Activated CD4-positive, alpha-beta T cell treated with anti-CD3 and anti-CD28 coated beads for 36 hours (primary cell): ENCODE measurements at regions of chr2 and their contacts with region 1.

Region 1: DNA sequence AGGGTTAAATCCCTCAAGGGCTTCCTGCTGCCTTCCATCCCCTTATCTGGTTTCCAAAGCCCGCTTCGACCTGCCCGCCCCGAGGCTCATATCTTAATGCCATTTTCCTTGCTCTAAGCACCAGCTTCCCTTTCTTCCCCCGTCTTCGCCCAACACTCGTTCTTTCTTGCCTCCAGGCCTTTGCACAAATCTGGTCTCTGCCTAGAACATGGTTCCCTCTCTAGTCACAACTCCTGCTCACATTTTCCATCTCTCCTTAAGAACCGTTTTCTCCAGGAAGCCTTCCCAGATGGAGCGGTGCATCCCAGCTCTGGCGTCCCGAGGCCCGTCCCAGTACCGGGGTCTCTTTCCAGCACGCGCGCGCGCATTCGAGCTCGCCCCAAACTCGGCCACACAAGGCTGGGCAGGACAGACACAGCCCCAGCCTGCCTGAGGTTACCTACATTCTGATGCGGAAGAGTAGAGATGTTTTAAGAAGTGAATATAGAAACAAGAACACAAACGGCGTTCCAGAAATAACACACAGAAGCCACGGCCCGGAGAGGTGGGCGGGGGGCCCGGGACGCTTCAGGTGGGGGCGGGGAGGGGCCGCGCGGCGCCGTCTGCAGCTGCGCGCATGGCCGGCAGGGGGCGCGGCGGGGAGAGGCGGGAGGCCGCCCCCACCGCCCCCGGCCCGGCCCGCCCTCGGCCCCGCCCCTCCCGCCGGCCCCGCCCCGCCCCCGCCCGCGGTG is at the start of gene DGKD:
- DNase-seq: peak; percentile 88
- ATAC-seq: peak; percentile 62
- H3K4me3 Mint-ChIP-seq: peak within 1 kb of the TSS; percentile 85
- H3K27ac Mint-ChIP-seq: peak within 1 kb of the TSS; percentile 80
- H3K4me1 Mint-ChIP-seq: peaks cover 63% of the 10 kb centered on the region
- H3K27me3 Mint-ChIP-seq: no peaks in the 10 kb centered on the region
- total RNA-seq, gene DGKD: 57.0 to 62.6 TPM

Region 2: DNA sequence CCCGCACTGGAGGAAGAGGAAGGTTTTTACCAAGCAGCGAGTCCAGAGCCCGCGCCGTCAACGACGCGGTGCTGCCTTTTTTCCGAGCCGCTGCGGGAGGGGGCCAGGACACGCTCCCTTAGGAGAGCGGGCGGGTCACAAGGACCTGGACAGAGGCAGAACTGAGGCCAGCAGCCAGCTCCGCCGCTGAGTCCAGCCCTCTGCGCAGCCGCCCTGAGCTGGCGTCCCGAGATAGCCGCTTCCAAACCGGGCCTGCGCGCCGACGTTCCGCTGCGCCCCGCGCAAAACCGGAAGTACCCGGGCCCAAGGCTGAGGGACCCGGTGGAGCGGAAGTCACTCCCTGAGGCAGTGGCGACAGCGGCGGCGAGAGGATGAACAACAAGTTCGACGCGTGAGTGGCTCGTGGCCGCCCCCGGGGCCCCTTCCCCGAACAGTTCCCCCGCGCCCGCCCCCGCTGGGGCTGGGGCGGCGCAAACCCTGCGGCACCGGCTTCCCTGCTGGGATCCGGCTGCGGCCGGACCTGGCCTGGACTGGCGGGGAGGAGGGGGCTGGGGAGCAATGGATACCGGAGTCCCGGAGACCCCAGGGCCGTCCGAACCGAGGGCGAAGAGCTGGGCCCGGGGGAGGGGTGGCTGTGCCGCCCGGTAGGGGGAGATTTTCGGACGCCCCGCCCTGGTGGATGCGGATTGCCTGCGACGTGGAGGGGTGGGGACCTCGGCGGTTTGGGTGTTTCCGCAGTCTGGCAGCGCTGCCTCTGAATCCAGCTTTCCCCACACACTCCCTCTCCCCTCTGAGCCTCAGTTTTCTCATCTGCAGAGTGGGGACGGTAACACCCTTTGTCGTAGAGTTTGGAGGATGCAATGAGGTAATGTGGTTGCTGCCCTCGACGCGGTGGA is 803.3 kb before region 1 on chr2 and contains the starts of genes EIF4E2 and TIGD1:
- CTCF ChIA-PET with region 1: no interaction called
- POLR2A ChIA-PET with region 1: no interaction called
- intact Hi-C with region 1: loop called in 1 of 2 experiments (anchors 2 kb)
- DNase-seq: peak; percentile 96
- ATAC-seq: peak; percentile 95
- H3K4me3 Mint-ChIP-seq: peak within 1 kb of the TSS; percentile 98
- H3K27ac Mint-ChIP-seq: peak within 1 kb of the TSS; percentile 100
- H3K4me1 Mint-ChIP-seq: peaks cover 66% of the 10 kb centered on the region
- H3K27me3 Mint-ChIP-seq: no peaks in the 10 kb centered on the region
- total RNA-seq, gene EIF4E2: 57.0 to 68.0 TPM
- total RNA-seq, gene TIGD1: 7.6 to 7.9 TPM

Region 3: DNA sequence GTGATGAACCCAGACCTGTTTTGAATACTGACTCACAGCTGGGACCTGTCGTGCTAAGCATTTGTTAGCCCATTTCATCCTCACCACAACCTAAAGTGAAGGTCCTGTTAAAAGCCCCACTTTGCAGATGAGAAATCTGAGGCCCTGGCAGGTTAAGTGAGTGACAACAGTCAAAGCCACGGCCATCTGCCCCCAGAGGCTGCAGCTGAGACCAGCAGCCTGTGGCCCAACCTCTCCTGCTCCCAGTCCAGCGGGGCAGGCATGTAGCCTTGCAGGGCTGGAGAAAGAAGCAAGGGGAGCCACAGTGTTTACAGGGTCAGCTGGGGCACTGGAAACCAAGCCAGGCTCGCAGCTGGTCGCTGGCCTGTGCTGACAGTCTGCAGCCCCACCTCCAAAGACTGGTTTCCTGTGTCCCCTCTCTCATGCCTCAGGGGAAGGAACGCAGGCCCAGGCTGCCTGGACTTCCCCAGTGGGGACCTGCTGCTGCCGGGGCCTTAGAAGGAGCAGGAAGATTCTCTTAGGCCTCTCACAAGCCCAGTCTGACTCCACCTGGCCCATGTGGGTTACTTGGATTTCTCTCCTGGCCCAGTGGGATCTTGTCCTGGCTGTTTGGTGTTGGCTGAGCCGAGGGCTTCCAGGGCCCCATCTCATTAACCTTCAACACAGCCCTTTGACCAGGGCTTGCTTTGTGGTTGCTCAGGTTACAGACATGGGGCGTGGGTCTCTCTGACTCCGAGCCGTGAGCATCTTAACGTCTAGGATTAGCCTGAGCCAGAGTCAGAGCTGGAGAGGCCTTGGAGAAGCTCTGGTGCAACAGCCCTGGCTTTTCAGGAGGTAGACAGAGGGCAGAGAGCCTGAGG is 292.1 kb before region 1 on chr2:
- CTCF ChIA-PET with region 1: no interaction called
- POLR2A ChIA-PET with region 1: no interaction called
- intact Hi-C with region 1: loop called in 1 of 2 experiments (anchors 5 kb)
- DNase-seq: peak; percentile 70
- ATAC-seq: peak; percentile 51
- H3K4me3 Mint-ChIP-seq: peak overlapping the region; percentile 96
- H3K27ac Mint-ChIP-seq: peak overlapping the region; percentile 90
- H3K4me1 Mint-ChIP-seq: peaks cover 40% of the 10 kb centered on the region
- H3K27me3 Mint-ChIP-seq: no peaks in the 10 kb centered on the region

Region 4: GRCh38 chr2:233338046-233338445 is 15.9 kb before region 1 on chr2:
- CTCF ChIA-PET with region 1: no interaction called
- POLR2A ChIA-PET with region 1: no interaction called
- intact Hi-C with region 1: no loop called
- DNase-seq: no peak
- ATAC-seq: no peak
- H3K4me3 Mint-ChIP-seq: no peak overlapping the region
- H3K27ac Mint-ChIP-seq: no peak overlapping the region
- H3K4me1 Mint-ChIP-seq: peaks cover 22% of the 10 kb centered on the region
- H3K27me3 Mint-ChIP-seq: no peaks in the 10 kb centered on the region

Region 5: DNA sequence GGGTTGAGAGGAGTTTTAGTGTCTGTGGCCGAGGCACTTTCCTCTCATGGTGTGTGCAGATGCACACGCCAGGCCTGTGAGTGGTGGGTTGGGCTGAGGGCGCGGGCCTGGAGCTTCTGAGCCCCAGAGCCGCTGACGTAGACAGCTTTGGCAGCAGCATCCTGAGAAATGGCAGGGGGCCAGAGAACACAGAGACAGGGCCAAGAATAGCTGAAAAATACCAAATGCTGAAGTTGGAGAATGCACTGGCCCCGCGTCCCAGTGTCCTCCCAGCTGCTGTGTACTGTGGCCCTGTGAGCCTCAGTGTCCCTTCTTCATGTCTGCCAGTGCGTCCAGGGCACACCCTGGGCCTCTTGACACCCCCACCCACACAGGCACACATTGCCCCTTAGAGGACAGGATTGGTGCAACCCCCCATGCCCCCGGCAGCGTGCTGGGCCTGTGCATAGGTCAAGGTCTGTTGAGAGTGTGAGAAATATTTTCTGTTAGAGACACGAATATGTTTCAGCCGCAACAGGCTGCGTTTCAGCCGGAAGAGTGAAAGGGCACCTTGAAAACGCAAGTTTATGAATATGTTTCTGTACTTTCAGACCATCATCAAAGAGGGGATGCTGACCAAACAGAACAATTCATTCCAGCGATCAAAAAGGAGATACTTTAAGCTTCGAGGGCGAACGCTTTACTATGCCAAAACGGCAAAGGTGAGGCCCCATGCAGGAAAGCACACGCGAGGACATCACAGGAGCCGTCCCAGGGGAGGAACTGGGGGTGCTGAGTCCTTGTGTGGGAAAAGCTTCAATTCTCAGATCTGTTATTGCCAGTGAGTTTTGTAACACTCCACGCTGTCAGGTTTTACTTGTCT is 34.0 kb after region 1 on chr2:
- CTCF ChIA-PET with region 1: interaction called, 3 read pairs
- POLR2A ChIA-PET with region 1: interaction called, 4 read pairs
- intact Hi-C with region 1: loop called (anchors 1 to 5 kb)
- DNase-seq: no peak
- ATAC-seq: no peak
- H3K4me3 Mint-ChIP-seq: no peak overlapping the region
- H3K27ac Mint-ChIP-seq: no peak overlapping the region
- H3K4me1 Mint-ChIP-seq: peaks cover 51% of the 10 kb centered on the region
- H3K27me3 Mint-ChIP-seq: no peaks in the 10 kb centered on the region

Region 6: GRCh38 chr2:233443468-233444183 is 89.7 kb after region 1 on chr2:
- CTCF ChIA-PET with region 1: interaction called, 7 read pairs
- POLR2A ChIA-PET with region 1: no interaction called
- intact Hi-C with region 1: loop called (anchors 1 kb)
- DNase-seq: peak; percentile 91
- ATAC-seq: peak; percentile 93
- H3K4me3 Mint-ChIP-seq: no peak overlapping the region
- H3K27ac Mint-ChIP-seq: no peak overlapping the region
- H3K4me1 Mint-ChIP-seq: peaks cover 11% of the 10 kb centered on the region
- H3K27me3 Mint-ChIP-seq: no peaks in the 10 kb centered on the region

Region 7: GRCh38 chr2:233867993-233868532 is 514.1 kb after region 1 on chr2 and contains the start of gene MSL3B:
- CTCF ChIA-PET with region 1: no interaction called
- POLR2A ChIA-PET with region 1: no interaction called
- intact Hi-C with region 1: loop called in 1 of 2 experiments (anchors 5 kb)
- DNase-seq: peak; percentile 73
- ATAC-seq: peak; percentile 86
- H3K4me3 Mint-ChIP-seq: peak within 1 kb of the TSS; percentile 79
- H3K27ac Mint-ChIP-seq: peak within 1 kb of the TSS; percentile 81
- H3K4me1 Mint-ChIP-seq: peaks cover 12% of the 10 kb centered on the region
- H3K27me3 Mint-ChIP-seq: peaks cover 14% of the 10 kb centered on the region